ENCODE measurements at regions of chr13 and their contacts with region 1.

Region 1: DNA sequence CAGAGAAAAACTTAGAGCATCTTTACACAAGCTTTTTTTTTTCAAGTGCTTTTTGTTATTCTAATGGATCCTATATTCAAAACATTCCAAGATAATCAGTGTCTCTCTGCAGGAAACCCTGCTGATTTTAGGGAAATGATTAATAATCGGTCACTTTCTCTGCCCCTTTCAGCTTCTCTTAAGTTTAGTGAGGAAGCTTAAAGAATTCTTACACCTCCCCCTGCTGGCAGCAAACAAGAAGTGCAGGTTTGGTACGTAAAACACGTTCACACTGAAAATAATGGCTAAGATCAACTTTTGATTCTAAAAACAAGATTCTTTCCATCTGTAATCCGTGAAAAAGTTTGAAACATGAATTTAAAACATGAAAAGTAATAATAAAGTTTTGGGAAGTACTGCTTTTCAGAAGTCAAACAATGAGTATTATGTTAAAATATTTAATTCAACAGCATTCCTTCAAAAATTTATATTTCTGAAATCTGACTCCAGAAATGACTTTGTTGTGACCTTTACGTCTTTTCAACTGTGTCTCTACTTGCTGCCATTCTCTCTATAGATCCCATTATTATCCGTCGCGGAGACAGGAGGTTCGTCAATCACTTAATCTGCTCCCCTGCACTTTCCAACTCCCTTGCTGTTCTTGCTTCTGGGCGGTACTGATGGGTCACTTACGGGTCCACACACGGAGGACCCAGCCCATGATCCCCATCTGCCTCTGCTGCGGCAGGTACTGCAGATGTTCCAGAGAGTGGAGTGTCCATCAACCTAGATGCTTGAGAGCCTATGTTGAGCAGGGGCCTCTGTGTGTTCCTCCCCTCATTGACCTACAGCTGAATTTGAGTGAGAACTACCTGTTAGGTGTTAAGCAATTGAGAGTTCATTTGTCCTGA is 203.1 kb upstream of the EDNRB start:
- DNase-seq: peak; percentile 63
- ATAC-seq: peak; percentile 53
- H3K4me3 Mint-ChIP-seq: no peak overlapping the region
- H3K27ac Mint-ChIP-seq: no peak overlapping the region
- H3K4me1 Mint-ChIP-seq: peaks cover 3% of the 10 kb centered on the region
- H3K27me3 Mint-ChIP-seq: peaks cover 14% of the 10 kb centered on the region
- CTCF ChIP-seq: peak; percentile 86

Region 2: GRCh38 chr13:77696879-77697216 is 424.9 kb before region 1 on chr13:
- CTCF ChIA-PET with region 1: no interaction called
- POLR2A ChIA-PET with region 1: no interaction called
- intact Hi-C with region 1: no loop called
- DNase-seq: no peak
- ATAC-seq: peak; percentile 5
- H3K4me3 Mint-ChIP-seq: peak overlapping the region; percentile 68
- H3K27ac Mint-ChIP-seq: peak overlapping the region; percentile 39
- H3K4me1 Mint-ChIP-seq: peaks cover 31% of the 10 kb centered on the region
- H3K27me3 Mint-ChIP-seq: no peaks in the 10 kb centered on the region
- CTCF ChIP-seq: no peak

Region 3: GRCh38 chr13:77779552-77780272 is 342.0 kb before region 1 on chr13:
- CTCF ChIA-PET with region 1: interaction called, 39 read pairs
- POLR2A ChIA-PET with region 1: interaction called, 3 read pairs
- intact Hi-C with region 1: loop called (anchors 2 kb)
- DNase-seq: peak; percentile 61
- ATAC-seq: peak; percentile 88
- H3K4me3 Mint-ChIP-seq: no peak overlapping the region
- H3K27ac Mint-ChIP-seq: no peak overlapping the region
- H3K4me1 Mint-ChIP-seq: peaks cover 13% of the 10 kb centered on the region
- H3K27me3 Mint-ChIP-seq: no peaks in the 10 kb centered on the region
- CTCF ChIP-seq: peak; percentile 66

Region 4: DNA sequence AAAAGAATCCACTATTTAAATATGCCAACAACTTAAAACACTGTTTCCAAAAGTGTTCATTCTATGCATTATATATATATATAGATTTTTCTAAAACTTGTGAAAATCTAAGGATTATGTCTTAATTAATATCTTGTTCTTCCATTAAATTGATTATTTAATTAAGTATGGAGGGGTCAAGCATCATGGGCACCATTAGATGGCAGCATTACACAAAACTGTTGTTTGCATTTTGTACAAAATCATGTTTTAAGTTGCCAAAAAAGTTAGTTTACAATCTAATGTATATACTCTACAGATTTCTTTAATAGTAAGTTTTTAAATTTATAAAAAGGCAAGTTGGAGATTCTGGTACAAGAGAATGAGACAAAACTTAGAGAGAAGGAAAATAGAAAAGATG is 10.1 kb after region 1 on chr13:
- CTCF ChIA-PET with region 1: interaction called, 14 read pairs
- POLR2A ChIA-PET with region 1: no interaction called
- intact Hi-C with region 1: no loop called
- DNase-seq: no peak
- ATAC-seq: no peak
- H3K4me3 Mint-ChIP-seq: no peak overlapping the region
- H3K27ac Mint-ChIP-seq: no peak overlapping the region
- H3K4me1 Mint-ChIP-seq: no peaks in the 10 kb centered on the region
- H3K27me3 Mint-ChIP-seq: peaks cover 6% of the 10 kb centered on the region
- CTCF ChIP-seq: no peak

Region 5: DNA sequence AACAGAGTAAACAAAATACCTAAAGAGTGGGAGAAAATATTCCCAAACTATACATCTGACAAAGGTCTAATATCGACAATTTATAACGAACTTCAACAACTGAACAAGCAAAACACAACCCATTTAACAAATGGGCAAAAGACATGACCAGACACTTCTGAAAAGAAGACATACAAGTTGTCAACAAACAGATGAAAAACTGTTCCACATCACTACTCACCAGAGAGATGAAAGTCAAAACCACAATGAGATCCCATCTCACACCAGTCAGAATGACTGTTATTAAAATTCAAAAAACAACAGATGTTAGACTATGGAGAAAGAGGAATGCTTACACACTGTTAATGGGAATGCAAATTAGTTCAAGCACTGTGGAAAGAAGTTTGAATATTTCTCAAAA is 30.7 kb after region 1 on chr13:
- CTCF ChIA-PET with region 1: no interaction called
- POLR2A ChIA-PET with region 1: no interaction called
- intact Hi-C with region 1: no loop called
- DNase-seq: no peak
- ATAC-seq: no peak
- H3K4me3 Mint-ChIP-seq: no peak overlapping the region
- H3K27ac Mint-ChIP-seq: no peak overlapping the region
- H3K4me1 Mint-ChIP-seq: no peaks in the 10 kb centered on the region
- H3K27me3 Mint-ChIP-seq: peaks cover 2% of the 10 kb centered on the region
- CTCF ChIP-seq: no peak

Region 6: DNA sequence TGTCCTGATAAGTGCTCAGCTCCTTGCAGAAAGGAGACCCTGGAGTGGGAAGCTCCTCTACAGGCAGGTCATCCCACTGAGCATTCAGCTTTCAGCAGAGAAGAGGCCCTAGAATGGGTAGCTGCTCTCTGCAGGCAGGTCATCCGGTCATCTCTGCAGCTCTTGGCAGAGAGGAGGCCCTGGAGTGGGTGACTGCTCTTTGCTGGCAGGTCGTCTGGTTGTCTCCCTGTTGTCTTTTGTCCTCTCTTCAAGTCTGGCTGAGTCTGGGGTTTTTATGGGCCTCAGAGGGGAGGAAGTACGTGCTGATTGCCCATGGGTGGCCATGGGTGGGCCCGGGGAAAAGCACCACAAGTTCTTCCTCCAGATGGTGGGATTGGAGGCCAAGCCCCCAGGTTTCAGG is 47.3 kb after region 1 on chr13:
- CTCF ChIA-PET with region 1: no interaction called
- POLR2A ChIA-PET with region 1: no interaction called
- intact Hi-C with region 1: no loop called
- DNase-seq: no peak
- ATAC-seq: no peak
- H3K4me3 Mint-ChIP-seq: no peak overlapping the region
- H3K27ac Mint-ChIP-seq: no peak overlapping the region
- H3K4me1 Mint-ChIP-seq: no peaks in the 10 kb centered on the region
- H3K27me3 Mint-ChIP-seq: peaks cover 1% of the 10 kb centered on the region
- CTCF ChIP-seq: no peak

Region 7: DNA sequence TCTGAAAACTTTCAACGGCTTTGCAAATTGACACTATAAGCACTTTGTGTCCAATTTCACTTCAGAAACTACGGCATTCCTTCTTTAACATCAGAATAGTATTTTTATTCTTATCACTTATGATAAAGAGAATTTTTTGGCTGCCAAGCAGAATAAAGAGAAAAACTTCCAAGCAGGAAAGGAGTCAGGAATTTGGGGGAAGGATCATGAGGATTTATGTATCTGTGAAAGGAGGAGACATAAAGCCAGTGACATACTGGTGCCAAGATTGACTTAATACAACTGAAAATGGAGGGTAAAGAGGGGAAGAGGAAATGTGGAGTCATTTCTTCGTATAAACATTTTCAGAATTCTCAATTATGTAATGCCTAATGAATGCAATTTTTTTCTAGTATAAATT is 1189.7 kb after region 1 on chr13:
- CTCF ChIA-PET with region 1: no interaction called
- POLR2A ChIA-PET with region 1: no interaction called
- intact Hi-C with region 1: no loop called
- DNase-seq: no peak
- ATAC-seq: no peak
- H3K4me3 Mint-ChIP-seq: no peak overlapping the region
- H3K27ac Mint-ChIP-seq: no peak overlapping the region
- H3K4me1 Mint-ChIP-seq: no peaks in the 10 kb centered on the region
- H3K27me3 Mint-ChIP-seq: no peaks in the 10 kb centered on the region
- CTCF ChIP-seq: no peak

Measured in activated CD8-positive, alpha-beta T cell treated with anti-CD3 and anti-CD28 coated beads for 36 hours (primary cell).